CD8-positive, alpha-beta T cell (primary cell): ENCODE measurements at regions of chr15 and their contacts with region 1.

Region 1: DNA sequence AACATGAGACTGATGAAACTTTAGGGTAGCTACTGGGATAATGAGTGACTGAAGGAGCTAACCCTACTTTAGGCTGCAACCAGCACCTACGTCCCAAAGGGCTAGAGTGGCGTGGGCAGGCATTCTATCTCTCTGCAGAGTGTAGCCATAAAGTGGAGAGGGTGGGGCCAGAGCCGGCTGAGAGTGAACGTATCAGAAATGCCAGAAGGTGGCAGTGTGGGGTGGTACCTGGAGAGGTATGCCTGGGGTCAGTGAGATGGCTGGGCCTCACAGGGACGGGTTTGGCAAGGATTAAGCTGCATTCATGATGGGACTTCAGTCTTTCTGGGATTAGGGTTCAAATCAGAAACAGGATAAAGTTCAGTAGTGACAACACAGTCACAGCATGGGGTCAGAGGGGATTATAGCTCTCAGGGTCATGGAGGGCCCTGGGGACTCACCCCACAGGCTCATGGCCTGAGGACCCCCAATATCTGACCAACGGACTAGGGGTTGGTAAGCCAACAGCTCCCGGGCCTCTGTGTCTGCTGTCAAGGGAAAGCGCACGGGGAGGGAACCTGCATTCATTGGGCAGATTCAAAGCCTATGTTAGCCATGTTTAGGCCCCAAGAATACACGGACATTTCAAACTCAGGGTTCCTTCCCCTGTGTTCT is 86.5 kb upstream of the FOXB1 start:
- DNase-seq: peak; percentile 43 to 77 (median 69)
- ATAC-seq: peak; percentile 74
- H3K4me3 ChIP-seq: no peak overlapping the region
- H3K4me3 Mint-ChIP-seq: no peak overlapping the region
- H3K27ac ChIP-seq: no peak overlapping the region
- H3K27ac Mint-ChIP-seq: no peak overlapping the region
- H3K4me1 ChIP-seq: peaks cover 9% of the 10 kb centered on the region
- H3K4me1 Mint-ChIP-seq: peaks cover 18% of the 10 kb centered on the region
- H3K27me3 ChIP-seq: no peaks in the 10 kb centered on the region
- H3K27me3 Mint-ChIP-seq: peaks cover 10% of the 10 kb centered on the region
- CTCF ChIP-seq: peak; percentile 71

Region 2: DNA sequence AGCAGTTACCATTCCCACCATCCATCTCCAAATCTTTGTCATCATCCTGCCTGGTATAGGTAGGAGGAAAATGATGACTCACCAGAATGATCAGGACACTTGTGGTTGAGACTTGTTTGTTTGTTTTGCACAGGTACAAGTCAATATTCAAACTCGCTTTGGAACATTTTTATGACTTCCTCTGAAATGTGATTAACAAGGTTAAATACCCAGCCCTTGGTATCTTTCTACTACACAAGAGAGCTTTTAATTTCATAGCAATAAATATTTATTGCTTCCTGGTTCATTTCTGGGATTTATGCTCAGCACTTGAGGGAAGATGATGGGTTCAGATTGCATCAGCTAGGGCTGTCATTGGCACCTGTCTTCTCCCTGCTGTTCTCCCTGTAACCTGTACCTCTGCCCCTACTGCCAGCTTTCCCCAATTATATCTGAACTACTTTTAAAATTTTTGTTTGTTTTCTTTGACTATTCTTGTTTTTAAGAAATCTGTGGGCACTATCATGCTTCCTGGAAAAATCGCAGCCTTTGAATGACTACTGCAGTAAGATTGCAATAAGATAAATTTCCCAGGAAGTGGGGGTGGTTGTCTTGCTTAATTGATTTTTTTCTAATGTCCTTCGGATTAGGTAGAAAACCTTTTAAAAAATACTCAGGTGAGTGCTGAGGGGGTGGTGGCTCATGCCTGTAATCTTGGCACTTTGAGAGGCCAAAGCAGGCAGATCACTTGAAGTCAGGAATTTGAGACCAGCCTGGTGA is 330.4 kb before region 1 on chr15:
- CTCF ChIA-PET with region 1: no interaction called
- POLR2A ChIA-PET with region 1: no interaction called
- intact Hi-C with region 1: no loop called
- DNase-seq: no peak
- ATAC-seq: no peak
- H3K4me3 ChIP-seq: no peak overlapping the region
- H3K4me3 Mint-ChIP-seq: no peak overlapping the region
- H3K27ac ChIP-seq: no peak overlapping the region
- H3K27ac Mint-ChIP-seq: no peak overlapping the region
- H3K4me1 ChIP-seq: no peaks in the 10 kb centered on the region
- H3K4me1 Mint-ChIP-seq: peaks cover 9% of the 10 kb centered on the region
- H3K27me3 ChIP-seq: peaks cover 0 to 2% of the 10 kb centered on the region in 2 experiments
- H3K27me3 Mint-ChIP-seq: peaks cover 3% of the 10 kb centered on the region
- CTCF ChIP-seq: no peak

Region 3: DNA sequence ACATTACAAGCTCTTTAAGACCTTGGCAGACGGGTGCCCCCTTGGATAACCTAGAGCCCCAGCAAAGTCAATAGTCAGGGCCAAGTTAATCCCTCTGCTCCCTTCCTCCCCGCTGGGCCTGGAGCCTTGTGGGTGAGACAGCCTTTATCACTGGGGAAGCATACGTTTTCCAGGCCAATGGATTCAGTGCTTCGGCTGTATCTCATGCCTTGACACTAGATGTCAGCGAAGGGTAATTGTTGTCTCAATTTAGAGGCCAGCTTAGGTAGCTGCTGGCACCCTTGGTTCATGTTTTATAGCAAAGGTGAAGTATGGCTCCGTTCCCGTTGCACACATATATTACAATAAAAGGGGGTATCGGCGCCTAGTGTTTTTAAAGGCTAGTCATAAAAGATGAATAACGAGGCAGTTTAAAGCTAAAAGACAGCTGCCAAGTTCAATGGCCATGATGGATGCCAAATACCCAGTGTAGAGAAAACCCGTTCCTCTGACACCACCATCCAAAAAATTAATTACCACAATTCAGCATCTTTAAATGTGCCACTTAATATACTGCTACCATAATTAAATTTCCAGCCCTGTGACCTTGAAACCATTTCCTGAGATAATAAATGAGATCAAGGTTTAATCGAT is 176.2 kb before region 1 on chr15:
- CTCF ChIA-PET with region 1: interaction called, 10 read pairs
- POLR2A ChIA-PET with region 1: no interaction called
- intact Hi-C with region 1: no loop called
- DNase-seq: peak in 2 of 9 experiments; percentile 17 to 33
- ATAC-seq: no peak
- H3K4me3 ChIP-seq: no peak overlapping the region
- H3K4me3 Mint-ChIP-seq: no peak overlapping the region
- H3K27ac ChIP-seq: no peak overlapping the region
- H3K27ac Mint-ChIP-seq: no peak overlapping the region
- H3K4me1 ChIP-seq: no peaks in the 10 kb centered on the region
- H3K4me1 Mint-ChIP-seq: no peaks in the 10 kb centered on the region
- H3K27me3 ChIP-seq: no peaks in the 10 kb centered on the region
- H3K27me3 Mint-ChIP-seq: peaks cover 10% of the 10 kb centered on the region
- CTCF ChIP-seq: no peak

Region 4: DNA sequence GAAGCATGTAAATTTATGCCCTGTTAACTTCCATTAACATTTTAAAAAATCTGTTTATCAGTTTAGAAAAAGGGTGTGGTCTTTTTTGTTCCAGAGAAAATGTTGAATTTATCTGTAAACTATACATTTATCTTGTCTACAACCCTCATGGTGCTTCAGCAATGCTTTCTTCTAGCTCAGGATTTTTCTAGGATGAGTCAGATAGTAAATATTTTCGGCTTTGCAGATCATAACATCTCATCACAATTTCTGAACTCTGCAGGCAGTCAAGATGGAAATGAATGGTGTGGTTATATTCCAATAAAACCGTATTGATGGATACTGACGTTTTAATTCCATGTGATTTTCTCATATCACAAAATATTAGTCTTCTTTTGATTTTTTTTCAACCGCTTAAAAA is 16.0 kb after region 1 on chr15:
- CTCF ChIA-PET with region 1: interaction called, 16 read pairs
- POLR2A ChIA-PET with region 1: no interaction called
- intact Hi-C with region 1: no loop called
- DNase-seq: no peak
- ATAC-seq: no peak
- H3K4me3 ChIP-seq: no peak overlapping the region
- H3K4me3 Mint-ChIP-seq: no peak overlapping the region
- H3K27ac ChIP-seq: no peak overlapping the region
- H3K27ac Mint-ChIP-seq: no peak overlapping the region
- H3K4me1 ChIP-seq: no peaks in the 10 kb centered on the region
- H3K4me1 Mint-ChIP-seq: no peaks in the 10 kb centered on the region
- H3K27me3 ChIP-seq: no peaks in the 10 kb centered on the region
- H3K27me3 Mint-ChIP-seq: peaks cover 18% of the 10 kb centered on the region
- CTCF ChIP-seq: no peak

Region 5: GRCh38 chr15:60128000-60128376 is 210.4 kb after region 1 on chr15:
- CTCF ChIA-PET with region 1: interaction called, 44 read pairs
- POLR2A ChIA-PET with region 1: no interaction called
- intact Hi-C with region 1: loop called in 1 of 2 experiments (anchors 1 kb)
- DNase-seq: peak in 1 of 9 experiments; percentile 50
- ATAC-seq: no peak
- H3K4me3 ChIP-seq: peak overlapping the region; percentile 54 to 71
- H3K4me3 Mint-ChIP-seq: peak overlapping the region; percentile 83
- H3K27ac ChIP-seq: peak overlapping the region; percentile 70 to 86
- H3K27ac Mint-ChIP-seq: peak overlapping the region; percentile 91
- H3K4me1 ChIP-seq: peaks cover 5% of the 10 kb centered on the region
- H3K4me1 Mint-ChIP-seq: peaks cover 32% of the 10 kb centered on the region
- H3K27me3 ChIP-seq: no peaks in the 10 kb centered on the region
- H3K27me3 Mint-ChIP-seq: peaks cover 2% of the 10 kb centered on the region
- CTCF ChIP-seq: no peak

Region 6: GRCh38 chr15:60326824-60327654 is 409.4 kb after region 1 on chr15:
- CTCF ChIA-PET with region 1: interaction called, 19 read pairs
- POLR2A ChIA-PET with region 1: no interaction called
- intact Hi-C with region 1: loop called (anchors 1 to 2 kb)
- DNase-seq: peak in 5 of 9 experiments; percentile 8 to 72 (median 32)
- ATAC-seq: peak; percentile 40
- H3K4me3 ChIP-seq: no peak overlapping the region
- H3K4me3 Mint-ChIP-seq: no peak overlapping the region
- H3K27ac ChIP-seq: no peak overlapping the region
- H3K27ac Mint-ChIP-seq: no peak overlapping the region
- H3K4me1 ChIP-seq: no peaks in the 10 kb centered on the region
- H3K4me1 Mint-ChIP-seq: peaks cover 2% of the 10 kb centered on the region
- H3K27me3 ChIP-seq: peaks cover 0 to 5% of the 10 kb centered on the region in 2 experiments
- H3K27me3 Mint-ChIP-seq: peaks cover 34% of the 10 kb centered on the region
- CTCF ChIP-seq: peak; percentile 73

Region 7: GRCh38 chr15:60865507-60865906 is 947.9 kb after region 1 on chr15:
- CTCF ChIA-PET with region 1: no interaction called
- POLR2A ChIA-PET with region 1: no interaction called
- intact Hi-C with region 1: no loop called
- DNase-seq: no peak
- ATAC-seq: no peak
- H3K4me3 ChIP-seq: no peak overlapping the region
- H3K4me3 Mint-ChIP-seq: no peak overlapping the region
- H3K27ac ChIP-seq: no peak overlapping the region
- H3K27ac Mint-ChIP-seq: no peak overlapping the region
- H3K4me1 ChIP-seq: peaks cover 7% of the 10 kb centered on the region
- H3K4me1 Mint-ChIP-seq: peaks cover 26% of the 10 kb centered on the region
- H3K27me3 ChIP-seq: no peaks in the 10 kb centered on the region
- H3K27me3 Mint-ChIP-seq: no peaks in the 10 kb centered on the region
- CTCF ChIP-seq: no peak